MCF 10A (cell line): ENCODE measurements at regions of chr4 and their contacts with region 1.

Region 1: DNA sequence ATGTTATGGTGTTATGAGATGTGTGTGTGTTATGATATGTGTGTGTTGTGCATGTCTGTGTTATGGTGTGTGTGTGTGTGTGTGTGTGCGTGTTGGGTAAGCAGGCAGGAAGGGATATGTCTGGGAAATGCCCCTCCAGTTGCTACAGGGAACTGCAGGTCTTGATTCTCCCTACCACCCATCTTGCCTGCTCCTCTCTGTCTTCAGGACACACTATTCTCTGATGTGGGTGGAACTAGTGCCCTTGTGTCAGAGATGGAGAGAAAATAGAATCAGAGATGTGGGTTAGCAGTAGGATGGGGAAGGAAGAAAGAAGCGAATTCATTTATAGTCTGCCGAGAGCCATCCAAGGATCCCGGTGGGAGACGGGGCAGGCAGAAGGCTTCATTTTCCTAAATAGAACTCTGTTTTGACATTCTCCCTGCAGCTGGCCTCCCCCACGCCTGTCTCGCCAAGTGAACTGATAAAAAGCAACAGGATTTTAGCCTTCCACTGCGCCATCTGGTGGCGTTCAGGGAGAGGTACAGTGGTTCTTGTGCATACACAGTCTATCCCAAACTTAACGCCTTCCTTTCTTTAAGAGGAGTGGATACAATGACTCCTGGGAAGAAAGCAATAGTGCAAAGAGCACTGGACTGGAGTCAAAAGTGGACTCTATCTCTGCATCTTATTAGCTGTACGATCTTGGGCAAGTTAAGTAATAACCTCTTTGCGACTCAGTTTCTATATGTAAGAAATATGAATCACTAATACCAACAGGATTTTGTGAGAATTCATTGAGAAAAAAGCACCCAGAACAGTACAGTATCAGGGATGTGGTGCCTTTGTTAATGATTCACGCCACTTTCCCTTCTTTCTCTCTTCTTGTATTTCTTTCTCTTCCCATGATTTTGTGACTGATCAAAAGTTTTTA is 14.1 kb upstream of the MGST2 start:
- DNase-seq: peak; percentile 85
- H3K4me3 Mint-ChIP-seq: no peak overlapping the region
- H3K27ac Mint-ChIP-seq: no peak overlapping the region
- H3K4me1 Mint-ChIP-seq: peaks cover 25% of the 10 kb centered on the region
- H3K27me3 Mint-ChIP-seq: no peaks in the 10 kb centered on the region
- CTCF ChIP-seq: peak; percentile 77

Region 2: GRCh38 chr4:139453371-139454110 is 198.0 kb before region 1 on chr4:
- CTCF ChIA-PET with region 1: no interaction called
- POLR2A ChIA-PET with region 1: no interaction called
- intact Hi-C with region 1: loop called (anchors 5 kb)
- DNase-seq: peak; percentile 98
- H3K4me3 Mint-ChIP-seq: peak overlapping the region; percentile 100
- H3K27ac Mint-ChIP-seq: peak overlapping the region; percentile 97
- H3K4me1 Mint-ChIP-seq: peaks cover 45% of the 10 kb centered on the region
- H3K27me3 Mint-ChIP-seq: no peaks in the 10 kb centered on the region
- CTCF ChIP-seq: no peak

Region 3: GRCh38 chr4:139554893-139555704 is 96.4 kb before region 1 on chr4:
- CTCF ChIA-PET with region 1: interaction called, 4 read pairs
- POLR2A ChIA-PET with region 1: interaction called, 20 read pairs
- intact Hi-C with region 1: loop called (anchors 1 kb)
- DNase-seq: peak; percentile 89
- H3K4me3 Mint-ChIP-seq: peak overlapping the region; percentile 82
- H3K27ac Mint-ChIP-seq: peak overlapping the region; percentile 73
- H3K4me1 Mint-ChIP-seq: peaks cover 25% of the 10 kb centered on the region
- H3K27me3 Mint-ChIP-seq: no peaks in the 10 kb centered on the region
- CTCF ChIP-seq: no peak

Region 4: GRCh38 chr4:139619644-139620043 is 31.9 kb before region 1 on chr4:
- CTCF ChIA-PET with region 1: interaction called, 45 read pairs
- POLR2A ChIA-PET with region 1: interaction called, 6 read pairs
- intact Hi-C with region 1: loop called (anchors 1 kb)
- DNase-seq: peak; percentile 56
- H3K4me3 Mint-ChIP-seq: no peak overlapping the region
- H3K27ac Mint-ChIP-seq: no peak overlapping the region
- H3K4me1 Mint-ChIP-seq: no peaks in the 10 kb centered on the region
- H3K27me3 Mint-ChIP-seq: no peaks in the 10 kb centered on the region
- CTCF ChIP-seq: peak; percentile 32

Region 5: GRCh38 chr4:139841464-139842246 is 190.1 kb after region 1 on chr4:
- CTCF ChIA-PET with region 1: no interaction called
- POLR2A ChIA-PET with region 1: no interaction called
- intact Hi-C with region 1: no loop called
- DNase-seq: no peak
- H3K4me3 Mint-ChIP-seq: no peak overlapping the region
- H3K27ac Mint-ChIP-seq: no peak overlapping the region
- H3K4me1 Mint-ChIP-seq: no peaks in the 10 kb centered on the region
- H3K27me3 Mint-ChIP-seq: no peaks in the 10 kb centered on the region
- CTCF ChIP-seq: no peak

Region 6: GRCh38 chr4:139934057-139934707 is 282.6 kb after region 1 on chr4:
- CTCF ChIA-PET with region 1: no interaction called
- POLR2A ChIA-PET with region 1: no interaction called
- intact Hi-C with region 1: no loop called
- DNase-seq: no peak
- H3K4me3 Mint-ChIP-seq: no peak overlapping the region
- H3K27ac Mint-ChIP-seq: no peak overlapping the region
- H3K4me1 Mint-ChIP-seq: no peaks in the 10 kb centered on the region
- H3K27me3 Mint-ChIP-seq: no peaks in the 10 kb centered on the region
- CTCF ChIP-seq: no peak

Region 7: DNA sequence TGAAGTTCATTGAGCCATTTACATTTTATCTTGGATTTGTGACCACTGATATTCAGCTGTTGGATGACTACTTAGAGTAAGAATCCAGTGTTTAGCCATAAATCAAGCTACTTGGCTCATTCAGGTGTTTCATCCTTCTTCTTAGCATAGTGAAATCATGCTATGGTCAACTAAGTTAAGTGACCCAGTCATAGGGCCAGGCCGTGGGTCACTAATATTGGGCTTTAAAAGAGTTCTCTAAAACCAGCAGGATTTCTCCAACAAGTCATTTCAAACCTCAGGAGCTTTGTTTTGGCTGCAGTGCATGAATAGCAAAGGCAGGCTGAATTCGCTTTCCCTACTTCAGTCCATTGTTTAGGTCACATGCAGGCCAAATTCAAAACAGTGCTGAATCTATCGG is 321.5 kb after region 1 on chr4:
- CTCF ChIA-PET with region 1: no interaction called
- POLR2A ChIA-PET with region 1: no interaction called
- intact Hi-C with region 1: no loop called
- DNase-seq: no peak
- H3K4me3 Mint-ChIP-seq: no peak overlapping the region
- H3K27ac Mint-ChIP-seq: no peak overlapping the region
- H3K4me1 Mint-ChIP-seq: peaks cover 9% of the 10 kb centered on the region
- H3K27me3 Mint-ChIP-seq: no peaks in the 10 kb centered on the region
- CTCF ChIP-seq: no peak

Region 8: DNA sequence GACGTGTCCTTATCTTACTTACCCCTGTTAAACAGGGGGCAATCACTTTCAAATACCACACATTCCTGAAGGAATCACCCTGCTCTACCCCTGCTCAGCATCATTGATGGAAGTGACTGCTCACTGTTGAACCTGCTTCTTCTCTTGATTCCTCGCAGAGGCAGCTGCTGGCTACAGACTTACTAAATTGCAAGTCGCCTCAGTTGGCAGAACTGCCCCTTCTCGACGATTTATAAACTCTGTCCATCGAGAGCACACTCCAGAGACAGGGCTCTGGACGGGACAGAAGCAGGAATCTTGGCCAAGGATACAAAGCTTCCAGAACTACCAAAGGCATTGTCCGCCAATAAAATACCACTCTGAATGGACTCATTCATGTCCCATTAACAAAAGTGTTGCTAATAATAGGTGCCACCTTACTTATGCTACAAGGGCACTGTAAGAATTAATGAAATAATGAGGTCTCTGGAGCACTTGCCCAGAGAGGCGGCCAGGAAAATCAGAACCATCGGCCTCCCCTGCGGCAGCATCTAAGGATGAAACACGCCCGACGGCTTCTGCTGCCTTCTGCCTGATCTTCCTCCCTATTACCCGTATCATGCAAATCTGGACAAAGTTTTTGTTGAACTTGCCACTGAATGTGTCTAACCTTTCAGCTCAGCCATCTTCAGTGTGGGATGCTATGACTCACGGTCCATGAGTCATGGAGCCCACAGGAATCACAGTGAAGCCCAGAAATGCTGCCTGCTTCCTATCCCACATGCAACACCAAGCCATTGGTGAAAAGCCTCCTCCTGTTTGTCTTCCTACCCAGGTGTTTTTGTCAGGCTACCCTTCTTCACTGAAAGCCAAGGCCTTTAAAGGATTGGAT is 337.6 kb after region 1 on chr4:
- CTCF ChIA-PET with region 1: no interaction called
- POLR2A ChIA-PET with region 1: no interaction called
- intact Hi-C with region 1: loop called (anchors 10 kb)
- DNase-seq: peak; percentile 95
- H3K4me3 Mint-ChIP-seq: peak overlapping the region; percentile 6
- H3K27ac Mint-ChIP-seq: peak overlapping the region; percentile 21
- H3K4me1 Mint-ChIP-seq: peaks cover 21% of the 10 kb centered on the region
- H3K27me3 Mint-ChIP-seq: no peaks in the 10 kb centered on the region
- CTCF ChIP-seq: no peak